Activated T-helper 1 cell treated with anti-CD3 and anti-CD28 coated beads, Interleukin-12 subunit alpha, Interleukin-12 subunit beta, Interleukin-2, Interleukin-4 antibody, amounts not matched to agents 30 ng/mL and 10 ng/mL and 1 ng/mL, durations not matched to agents 14 hours and 24 hours and 36 hours (primary cell): ENCODE measurements at regions of chr3 and their contacts with region 1.

Region 1: GRCh38 chr3:169075710-169076109 is 587.8 kb downstream of the MECOM start:
- DNase-seq: no peak
- H3K4me3 Mint-ChIP-seq: no peak overlapping the region
- H3K27ac Mint-ChIP-seq: no peak overlapping the region
- H3K4me1 Mint-ChIP-seq: no peaks in the 10 kb centered on the region
- H3K27me3 Mint-ChIP-seq: no peaks in the 10 kb centered on the region

Region 2: DNA sequence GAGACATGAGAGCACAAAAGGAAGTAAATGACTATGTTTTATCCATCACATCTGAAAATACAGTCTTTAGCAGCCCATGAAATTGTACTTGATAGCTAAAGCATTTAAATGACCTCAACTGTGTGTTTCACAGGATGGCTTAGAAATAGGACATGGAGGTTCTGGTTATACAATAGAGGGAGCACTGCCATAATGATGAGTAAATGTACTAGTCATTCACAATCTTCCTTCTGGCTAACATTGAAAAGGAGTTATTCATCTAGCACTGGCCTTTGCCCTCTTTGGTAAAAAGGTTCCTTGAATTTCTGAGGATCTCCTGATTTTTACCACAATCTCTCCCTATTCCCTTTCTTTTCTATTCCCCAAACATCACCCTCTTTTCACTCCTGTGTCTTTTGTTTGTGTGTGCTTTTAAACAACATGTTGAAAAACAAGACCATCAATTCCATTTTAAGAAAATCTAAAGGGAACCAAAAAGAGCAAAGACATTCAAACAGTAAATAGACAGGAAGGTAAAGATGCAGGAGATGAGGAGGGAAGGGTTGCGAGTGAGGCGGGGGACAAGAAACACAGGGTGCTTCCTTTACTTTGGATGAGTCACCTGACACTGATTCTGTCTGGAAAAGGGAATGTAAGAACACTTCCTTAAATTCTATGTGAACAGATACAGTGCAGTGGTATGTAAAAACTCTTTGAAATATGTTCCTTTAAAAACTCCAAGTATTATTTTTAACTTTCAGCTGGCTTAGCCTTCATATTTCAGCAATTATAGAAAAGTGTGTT is 31.2 kb before region 1 on chr3:
- intact Hi-C with region 1: loop called (anchors 1 kb)
- DNase-seq: no peak
- H3K4me3 Mint-ChIP-seq: no peak overlapping the region
- H3K27ac Mint-ChIP-seq: no peak overlapping the region
- H3K4me1 Mint-ChIP-seq: no peaks in the 10 kb centered on the region
- H3K27me3 Mint-ChIP-seq: no peaks in the 10 kb centered on the region

Region 3: DNA sequence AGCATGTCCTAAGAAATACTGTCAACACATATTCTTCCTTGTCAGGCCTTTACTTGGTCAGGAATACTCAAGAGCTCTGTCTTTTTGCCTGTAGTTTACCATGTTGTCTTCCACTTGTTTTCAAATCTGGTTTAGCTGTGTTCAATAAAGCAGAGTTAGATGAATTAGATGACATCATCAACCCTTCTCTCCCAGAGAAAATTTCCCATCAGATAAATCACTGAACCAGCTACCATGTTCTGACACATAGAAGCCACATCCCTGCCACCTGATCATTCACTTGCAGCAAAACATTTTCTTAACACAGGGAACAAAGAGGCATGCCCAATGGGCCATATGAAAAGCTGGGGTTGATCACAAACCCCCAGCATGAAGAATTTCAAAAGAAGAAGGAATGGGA is 647.0 kb after region 1 on chr3:
- intact Hi-C with region 1: no loop called
- DNase-seq: no peak
- H3K4me3 Mint-ChIP-seq: no peak overlapping the region
- H3K27ac Mint-ChIP-seq: no peak overlapping the region
- H3K4me1 Mint-ChIP-seq: no peaks in the 10 kb centered on the region
- H3K27me3 Mint-ChIP-seq: peaks cover 8% of the 10 kb centered on the region